ENCODE measurements at regions of chr17 and their contacts with region 1.

Region 1: DNA sequence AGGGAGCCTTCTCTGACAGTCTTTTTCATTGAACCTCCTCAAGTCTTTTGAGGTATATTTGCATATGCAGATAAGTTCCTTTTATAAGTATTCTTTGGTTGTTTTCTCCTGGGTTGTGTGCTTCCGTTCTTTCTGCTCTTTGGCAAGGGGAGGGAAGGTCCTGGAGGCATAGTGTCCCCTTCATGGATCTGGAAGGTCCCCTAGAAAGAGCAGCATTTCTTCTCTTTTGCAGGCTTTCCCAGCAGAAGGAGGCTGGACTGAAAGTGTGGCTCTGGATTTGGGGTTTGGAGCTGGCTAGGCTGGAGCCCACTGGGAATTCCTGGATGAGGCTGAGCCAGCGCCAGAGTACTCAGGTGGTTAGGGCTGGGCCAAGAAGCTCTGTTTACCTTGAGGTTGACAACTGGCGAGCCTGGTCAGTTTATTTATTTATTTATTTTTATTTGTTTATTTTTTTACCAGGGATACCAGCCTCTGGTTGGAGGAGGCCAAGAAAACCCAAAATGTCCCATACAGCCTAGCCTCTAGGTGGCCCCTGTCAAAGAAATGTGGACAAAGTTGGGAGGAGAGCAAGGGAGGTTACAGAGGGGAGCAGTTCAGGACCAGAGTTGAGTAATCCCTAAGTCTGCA is 5.4 kb upstream of the TOP2A start:
- DNase-seq: peak; percentile 64 to 65
- ATAC-seq: peak; percentile 66 to 82; a peak in 5 of 6 replicates
- H3K4me3 ChIP-seq: no peak overlapping the region
- H3K27ac ChIP-seq: peak overlapping the region in 1 of 2 experiments; percentile 17; a peak in 1 of 6 replicates
- H3K4me1 ChIP-seq: peaks cover 25% of the 10 kb centered on the region
- CTCF ChIP-seq: peak; percentile 41
- EP300 ChIP-seq: no peak
- POLR2A ChIP-seq: no peak
- RAD21 ChIP-seq: no peak; a peak in 1 of 5 replicates

Region 2: GRCh38 chr17:40264458-40265185 is 158.5 kb before region 1 on chr17:
- CTCF ChIA-PET with region 1: no interaction called
- POLR2A ChIA-PET with region 1: no interaction called
- DNase-seq: no peak
- ATAC-seq: no peak
- H3K4me3 ChIP-seq: no peak overlapping the region
- H3K27ac ChIP-seq: no peak overlapping the region
- H3K4me1 ChIP-seq: no peaks in the 10 kb centered on the region
- CTCF ChIP-seq: no peak
- EP300 ChIP-seq: no peak
- POLR2A ChIP-seq: no peak
- RAD21 ChIP-seq: no peak

Region 3: GRCh38 chr17:40410082-40410481 is 13.0 kb before region 1 on chr17:
- CTCF ChIA-PET with region 1: interaction called, 24 read pairs
- POLR2A ChIA-PET with region 1: interaction called, 5 read pairs
- DNase-seq: no peak
- ATAC-seq: no peak
- H3K4me3 ChIP-seq: no peak overlapping the region
- H3K27ac ChIP-seq: 0 out of 6 replicates have a peak overlapping the region, but pooled peaks of 1 of the 2 experiments have one; percentile 15
- H3K4me1 ChIP-seq: peaks cover 14% of the 10 kb centered on the region
- CTCF ChIP-seq: no peak
- EP300 ChIP-seq: no peak
- POLR2A ChIP-seq: no peak
- RAD21 ChIP-seq: no peak